ENCODE measurements at regions of chrX and their contacts with region 1.

Region 1: DNA sequence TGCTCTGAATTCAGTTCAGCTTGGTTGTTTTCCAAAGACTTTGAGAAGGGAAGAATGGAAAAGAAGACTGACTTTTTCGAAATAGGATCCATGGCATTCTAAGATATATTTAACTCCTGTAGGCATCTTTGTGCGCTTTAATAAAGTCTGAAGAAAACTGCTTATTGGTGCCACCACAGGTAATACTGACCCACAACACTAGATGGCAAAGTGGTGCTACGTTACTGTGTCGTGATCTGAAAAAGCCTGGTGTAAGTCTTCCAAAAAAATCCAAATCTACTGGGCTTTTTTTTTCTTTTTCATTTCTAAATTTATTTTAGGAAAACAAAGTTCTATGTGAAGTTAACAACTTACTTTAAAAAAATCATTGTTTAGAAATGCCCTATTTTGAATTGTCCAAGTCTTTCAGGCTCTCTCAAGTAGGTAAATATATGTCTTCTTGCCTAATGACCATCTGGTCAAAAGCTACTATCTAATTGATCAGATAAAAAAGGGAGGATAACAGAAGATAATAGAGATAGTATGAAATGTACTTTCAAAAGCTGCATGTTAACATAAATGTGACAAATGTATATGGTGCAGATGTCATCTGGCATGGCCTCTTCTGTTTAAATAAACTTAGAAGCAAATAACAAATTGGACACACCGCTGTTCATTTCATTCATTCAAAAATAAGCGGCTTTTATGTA is 47.0 kb upstream of the MID1IP1 start:
- DNase-seq: no peak
- ATAC-seq: peak in 3 of 4 donors; percentile 61 to 85 (median 68)
- H3K4me3 ChIP-seq: no peak overlapping the region
- H3K27ac ChIP-seq: no peak overlapping the region
- H3K4me1 ChIP-seq: no peaks in the 10 kb centered on the region
- H3K27me3 ChIP-seq: peaks cover 0 to 8% (median 0%) of the 10 kb centered on the region in 3 donors
- CTCF ChIP-seq: peak; percentile 65

Region 2: GRCh38 chrX:37509349-37509748 is 1244.9 kb before region 1 on chrX:
- intact Hi-C with region 1: no loop called
- DNase-seq: no peak
- ATAC-seq: peak; percentile 56 to 69 (median 64)
- H3K4me3 ChIP-seq: no peak overlapping the region
- H3K27ac ChIP-seq: no peak overlapping the region
- H3K4me1 ChIP-seq: no peaks in the 10 kb centered on the region
- H3K27me3 ChIP-seq: no peaks in the 10 kb centered on the region
- CTCF ChIP-seq: peak; percentile 43

Region 3: DNA sequence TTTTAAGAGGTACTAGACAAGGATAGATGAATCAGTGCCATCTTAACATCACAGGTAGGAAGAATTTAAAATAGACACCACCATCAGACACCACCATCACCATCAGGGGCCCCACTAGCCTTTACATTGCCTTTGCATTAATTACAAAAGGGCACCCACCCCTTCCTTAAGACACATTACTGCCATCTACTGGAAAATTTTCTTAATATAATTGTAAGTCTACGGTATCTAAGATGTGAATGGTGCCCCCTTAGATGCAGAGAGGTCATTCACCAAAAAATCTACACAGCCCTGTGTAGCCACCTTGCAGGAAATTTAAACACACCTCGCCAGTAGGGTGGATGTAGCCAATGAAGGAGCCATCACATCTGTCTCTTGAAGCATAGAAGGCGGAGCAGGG is 231.1 kb after region 1 on chrX:
- intact Hi-C with region 1: loop called in 1 of 2 experiments (anchors 10 kb)
- DNase-seq: no peak
- ATAC-seq: peak in 2 of 4 donors; percentile 59 to 60
- H3K4me3 ChIP-seq: no peak overlapping the region
- H3K27ac ChIP-seq: no peak overlapping the region
- H3K4me1 ChIP-seq: no peaks in the 10 kb centered on the region
- H3K27me3 ChIP-seq: peaks cover 0 to 5% (median 0%) of the 10 kb centered on the region in 3 donors
- CTCF ChIP-seq: peak; percentile 21

Region 4: GRCh38 chrX:39149761-39150160 is 395.5 kb after region 1 on chrX:
- intact Hi-C with region 1: loop called in 1 of 2 experiments (anchors 10 kb)
- DNase-seq: peak; percentile 75 to 86
- ATAC-seq: peak; percentile 70 to 88 (median 74)
- H3K4me3 ChIP-seq: no peak overlapping the region
- H3K27ac ChIP-seq: no peak overlapping the region
- H3K4me1 ChIP-seq: no peaks in the 10 kb centered on the region
- H3K27me3 ChIP-seq: peaks cover 0 to 17% (median 0%) of the 10 kb centered on the region in 3 donors
- CTCF ChIP-seq: peak; percentile 74

Region 5: GRCh38 chrX:39242187-39242586 is 487.9 kb after region 1 on chrX:
- intact Hi-C with region 1: loop called in 1 of 2 experiments (anchors 10 kb)
- DNase-seq: no peak
- ATAC-seq: peak; percentile 73 to 87 (median 75)
- H3K4me3 ChIP-seq: no peak overlapping the region
- H3K27ac ChIP-seq: no peak overlapping the region
- H3K4me1 ChIP-seq: no peaks in the 10 kb centered on the region
- H3K27me3 ChIP-seq: peaks cover 0 to 14% (median 0%) of the 10 kb centered on the region in 3 donors
- CTCF ChIP-seq: peak; percentile 58

Region 6: DNA sequence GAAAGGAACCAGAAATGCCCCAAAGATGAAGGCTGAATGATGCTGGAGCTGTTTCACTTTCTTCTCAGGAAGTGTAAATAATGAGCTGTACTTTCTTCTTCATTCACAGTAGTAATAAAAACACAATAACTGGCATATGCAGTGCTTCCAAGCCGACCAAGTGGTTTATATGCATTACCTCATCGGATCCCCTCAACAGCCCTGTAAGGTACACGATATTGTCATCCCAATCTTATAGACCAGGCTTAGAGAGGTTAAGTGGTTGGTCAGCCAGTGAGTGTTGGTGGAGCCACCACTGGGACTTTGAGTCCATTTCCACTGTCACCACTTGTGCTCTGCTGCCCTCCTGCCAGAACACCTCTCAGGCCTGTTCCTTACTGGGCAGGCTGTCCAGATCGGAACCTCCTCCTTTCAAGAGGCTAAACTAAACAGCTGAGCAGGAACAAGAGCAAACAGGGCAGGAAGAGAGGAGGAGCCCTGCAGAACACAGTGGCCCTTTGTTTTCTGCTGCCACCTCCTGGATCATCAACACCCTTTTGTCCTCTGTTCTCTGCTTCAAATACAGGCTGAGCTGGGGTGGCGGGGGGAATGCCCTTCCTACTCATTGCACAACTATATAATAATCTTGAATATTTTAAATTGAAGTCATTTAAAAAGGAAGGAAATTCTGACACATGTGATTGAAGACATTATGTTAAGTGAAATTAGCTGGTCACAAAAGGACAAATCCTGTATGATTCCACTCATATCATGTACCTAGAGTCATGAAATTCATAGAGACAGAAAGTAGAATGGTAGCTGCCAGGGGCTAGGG is 1714.0 kb after region 1 on chrX:
- intact Hi-C with region 1: loop called in 1 of 2 experiments (anchors 10 kb)
- DNase-seq: no peak
- ATAC-seq: peak; percentile 48 to 78 (median 64)
- H3K4me3 ChIP-seq: no peak overlapping the region
- H3K27ac ChIP-seq: no peak overlapping the region
- H3K4me1 ChIP-seq: no peaks in the 10 kb centered on the region
- H3K27me3 ChIP-seq: peaks cover 0 to 46% (median 0%) of the 10 kb centered on the region in 3 donors
- CTCF ChIP-seq: no peak

Measured in psoas muscle (tissue), 8 donors.